T-cell (primary cell): ENCODE measurements at regions of chr9 and their contacts with region 1.

Region 1: DNA sequence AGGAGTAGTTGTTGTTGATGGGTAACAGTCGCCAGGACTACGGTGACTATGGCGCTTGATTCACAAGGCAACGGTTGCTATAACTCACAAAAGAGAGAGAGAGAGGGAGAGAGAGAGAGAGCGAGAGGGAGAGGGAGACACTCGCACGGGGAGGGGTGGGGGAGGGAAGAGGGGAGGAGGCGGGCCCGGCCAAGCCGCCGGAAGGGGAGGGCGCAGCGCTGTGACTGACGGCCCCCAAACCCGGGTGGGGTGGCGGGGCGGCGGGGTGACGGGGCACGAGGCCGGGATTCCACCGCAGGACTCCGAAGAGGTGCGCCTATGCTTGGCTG is at the start of gene RFX3:
- DNase-seq: peak; percentile 79 to 96 (median 91)
- ATAC-seq: peak; percentile 64 to 73 (median 68)
- H3K4me3 ChIP-seq: peak within 1 kb of the TSS; percentile 81 to 85
- H3K4me3 Mint-ChIP-seq: peak within 1 kb of the TSS; percentile 95 to 96 (median 96)
- H3K27ac ChIP-seq: peak within 1 kb of the TSS; percentile 100
- H3K27ac Mint-ChIP-seq: peak within 1 kb of the TSS; percentile 99 to 100
- H3K4me1 ChIP-seq: peaks cover 12 to 34% of the 10 kb centered on the region in 2 experiments
- H3K4me1 Mint-ChIP-seq: peaks cover 55 to 76% (median 65%) of the 10 kb centered on the region in 3 donors
- H3K27me3 ChIP-seq: no peaks in the 10 kb centered on the region
- H3K27me3 Mint-ChIP-seq: no peaks in the 10 kb centered on the region
- total RNA-seq, gene RFX3: 16.3 to 32.2 (median 20.5) TPM

Region 2: DNA sequence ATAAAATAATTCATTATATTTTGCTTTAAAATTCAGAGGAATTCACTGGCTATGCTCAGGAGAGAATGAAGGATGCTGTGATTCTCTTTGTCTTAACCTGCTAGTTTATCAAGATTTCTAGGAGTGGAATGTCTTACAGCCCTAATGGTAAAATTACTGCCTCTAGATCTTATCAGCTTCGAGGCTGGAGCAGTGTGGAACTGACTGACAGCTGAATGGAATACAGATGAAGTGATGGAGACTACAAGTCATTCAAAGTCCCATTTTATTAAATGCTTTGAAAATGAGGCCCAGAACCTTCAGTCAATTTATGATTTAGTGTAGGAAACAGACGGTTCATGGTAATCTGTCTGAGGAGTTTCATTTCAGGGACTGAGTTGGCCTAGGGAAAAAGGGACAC is 202.1 kb before region 1 on chr9:
- CTCF ChIA-PET with region 1: no interaction called
- POLR2A ChIA-PET with region 1: no interaction called
- DNase-seq: no peak
- ATAC-seq: no peak
- H3K4me3 ChIP-seq: no peak overlapping the region
- H3K4me3 Mint-ChIP-seq: no peak overlapping the region
- H3K27ac ChIP-seq: no peak overlapping the region
- H3K27ac Mint-ChIP-seq: no peak overlapping the region
- H3K4me1 ChIP-seq: no peaks in the 10 kb centered on the region
- H3K4me1 Mint-ChIP-seq: peaks cover 0 to 2% (median 0%) of the 10 kb centered on the region in 3 donors
- H3K27me3 ChIP-seq: no peaks in the 10 kb centered on the region
- H3K27me3 Mint-ChIP-seq: no peaks in the 10 kb centered on the region

Region 3: DNA sequence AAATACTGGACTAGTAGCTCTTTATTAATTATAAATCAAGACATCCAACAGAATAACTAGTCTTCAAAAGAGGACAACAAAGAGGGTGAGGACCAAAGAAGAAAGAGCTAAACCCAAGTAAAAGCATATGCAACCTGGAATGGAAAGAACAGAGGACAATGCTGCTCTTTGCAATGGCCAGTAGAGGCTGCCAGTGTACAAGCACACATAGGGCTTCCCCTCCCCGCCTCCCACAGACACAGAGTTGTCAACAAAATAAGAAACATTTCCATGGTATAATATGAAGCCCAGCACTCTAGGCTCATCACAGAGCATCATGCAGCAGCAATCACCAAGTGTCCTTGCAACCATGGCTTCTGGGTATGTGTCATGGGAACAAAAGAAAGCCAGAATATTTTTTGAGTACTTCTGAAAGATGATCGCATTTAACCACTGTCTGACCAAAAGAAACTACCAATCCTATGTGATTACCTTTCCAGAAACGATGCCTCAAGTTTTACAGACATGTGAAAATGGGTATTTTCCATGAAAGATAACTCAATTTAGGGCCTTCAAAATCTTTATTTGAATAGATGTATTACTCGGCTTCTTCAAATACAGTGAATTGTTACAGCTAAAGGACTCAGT is 58.1 kb before region 1 on chr9:
- CTCF ChIA-PET with region 1: interaction called, 6 to 12 read pairs
- POLR2A ChIA-PET with region 1: interaction called, 4 read pairs
- DNase-seq: peak in 34 of 35 experiments; percentile 34 to 77 (median 51)
- ATAC-seq: peak; percentile 89 to 100 (median 99)
- H3K4me3 ChIP-seq: no peak overlapping the region
- H3K4me3 Mint-ChIP-seq: no peak overlapping the region
- H3K27ac ChIP-seq: no peak overlapping the region
- H3K27ac Mint-ChIP-seq: peak overlapping the region in 1 of 2 donors; percentile 77
- H3K4me1 ChIP-seq: peaks cover 0 to 3% of the 10 kb centered on the region in 2 experiments
- H3K4me1 Mint-ChIP-seq: peaks cover 5 to 15% (median 10%) of the 10 kb centered on the region in 3 donors
- H3K27me3 ChIP-seq: no peaks in the 10 kb centered on the region
- H3K27me3 Mint-ChIP-seq: no peaks in the 10 kb centered on the region

Region 4: GRCh38 chr9:3478549-3478953 is 47.2 kb before region 1 on chr9:
- CTCF ChIA-PET with region 1: interaction called in 1 of 2 experiments, 10 read pairs
- POLR2A ChIA-PET with region 1: interaction called, 10 to 28 read pairs
- DNase-seq: peak in 1 of 35 experiments; percentile 55
- ATAC-seq: peak; percentile 54 to 80 (median 70)
- H3K4me3 ChIP-seq: no peak overlapping the region
- H3K4me3 Mint-ChIP-seq: peak overlapping the region; percentile 78 to 86 (median 83)
- H3K27ac ChIP-seq: peak overlapping the region; percentile 87
- H3K27ac Mint-ChIP-seq: peak overlapping the region; percentile 91 to 96
- H3K4me1 ChIP-seq: peaks cover 9 to 15% of the 10 kb centered on the region in 2 experiments
- H3K4me1 Mint-ChIP-seq: peaks cover 59 to 66% (median 64%) of the 10 kb centered on the region in 3 donors
- H3K27me3 ChIP-seq: no peaks in the 10 kb centered on the region
- H3K27me3 Mint-ChIP-seq: no peaks in the 10 kb centered on the region